ENCODE measurements at regions of chr2 and their contacts with region 1.

Region 1: DNA sequence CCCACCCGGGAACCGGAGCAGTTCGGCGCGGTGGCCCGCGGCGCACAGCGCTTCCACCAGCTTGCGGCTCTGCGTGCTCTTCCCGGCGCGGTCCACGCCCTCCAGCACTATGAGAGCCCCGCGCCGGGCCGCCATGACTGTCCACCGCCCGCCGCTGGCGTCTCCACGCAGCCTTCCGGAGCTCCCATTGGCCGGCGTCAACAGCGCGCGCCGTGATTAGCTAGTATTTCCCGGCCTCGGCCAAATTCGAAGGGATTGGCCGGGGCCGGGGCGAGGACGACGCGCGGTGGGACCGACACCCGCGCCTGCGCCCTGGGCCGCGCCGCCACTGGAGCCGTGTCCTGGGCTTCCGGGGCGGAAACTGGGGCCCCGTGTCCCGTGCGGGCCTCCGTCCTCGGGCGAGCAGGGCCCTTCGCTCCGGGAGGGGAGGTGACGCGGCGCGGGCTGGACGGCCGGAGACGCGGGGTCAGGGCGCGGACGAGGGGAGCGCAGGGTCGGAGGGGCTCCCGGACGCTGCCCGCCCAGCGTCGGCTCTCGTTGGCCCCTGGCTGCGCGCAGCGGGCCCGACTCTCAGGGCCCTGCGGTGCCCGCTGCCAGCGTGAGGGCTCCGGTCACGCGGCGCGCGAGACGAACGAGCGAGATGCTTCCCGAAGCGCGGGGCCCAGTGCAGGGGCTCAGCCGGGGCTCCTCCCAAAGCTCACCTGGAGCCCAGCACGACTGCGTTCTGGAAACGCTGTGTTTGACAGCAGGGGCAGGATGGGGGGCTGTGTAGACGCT is at the start of gene DTYMK:
- DNase-seq: peak; percentile 92 to 98 (median 97)
- ATAC-seq: peak; percentile 97
- H3K4me3 ChIP-seq: peak within 1 kb of the TSS; percentile 91
- H3K4me3 Mint-ChIP-seq: peak within 1 kb of the TSS; percentile 84 to 98 (median 95)
- H3K27ac ChIP-seq: peak within 1 kb of the TSS; percentile 81
- H3K27ac Mint-ChIP-seq: peak within 1 kb of the TSS; percentile 74 to 96 (median 88)
- H3K4me1 ChIP-seq: peaks cover 8 to 18% of the 10 kb centered on the region in 2 donors
- H3K4me1 Mint-ChIP-seq: peaks cover 4 to 40% (median 31%) of the 10 kb centered on the region in 7 donors
- H3K27me3 ChIP-seq: no peaks in the 10 kb centered on the region
- H3K27me3 Mint-ChIP-seq: no peaks in the 10 kb centered on the region
- total RNA-seq, gene DTYMK: 12.0 to 65.7 (median 17.0) TPM

Region 2: DNA sequence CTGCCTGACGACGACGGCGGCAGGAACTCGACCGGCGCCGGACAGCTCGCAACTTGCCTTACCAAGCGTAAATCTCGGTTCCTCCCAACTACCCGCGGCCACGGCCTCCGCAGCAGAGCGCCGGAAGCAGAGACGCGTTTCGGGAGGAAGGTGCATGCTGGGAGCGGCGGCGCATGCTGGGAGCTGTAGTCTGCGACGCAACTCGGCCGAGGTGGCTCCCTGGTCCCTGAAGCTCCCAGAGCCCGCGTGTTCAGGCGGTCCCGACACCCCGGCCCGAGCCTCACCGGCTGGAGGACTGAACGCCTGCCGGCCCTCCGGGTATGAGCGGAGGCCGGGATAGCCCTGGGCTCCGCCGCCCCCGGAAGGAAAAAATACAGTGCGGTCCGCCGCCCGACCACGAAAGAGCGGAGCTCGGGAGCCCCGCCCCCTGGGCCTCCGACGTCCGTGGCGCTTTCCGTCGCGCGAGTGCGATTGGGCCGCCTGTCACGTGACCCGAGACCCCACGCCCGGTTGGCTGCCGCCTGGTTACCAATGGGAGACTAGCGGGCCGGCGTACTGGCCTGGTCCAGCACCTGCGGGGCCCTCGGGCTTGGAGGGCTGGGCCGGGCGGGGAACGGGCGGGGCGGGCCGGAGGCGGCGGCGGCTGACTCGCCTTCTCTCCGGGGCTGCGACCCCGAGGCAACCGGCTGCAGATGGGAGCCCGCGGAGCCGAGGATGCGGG is 1100.5 kb before region 1 on chr2 and contains the start of gene CAPN10:
- CTCF ChIA-PET with region 1: no interaction called
- POLR2A ChIA-PET with region 1: no interaction called
- intact Hi-C with region 1: loop called (anchors 2 kb)
- DNase-seq: peak; percentile 93 to 98 (median 97)
- ATAC-seq: peak; percentile 92
- H3K4me3 ChIP-seq: peak within 1 kb of the TSS; percentile 89
- H3K4me3 Mint-ChIP-seq: peak within 1 kb of the TSS; percentile 82 to 97 (median 94)
- H3K27ac ChIP-seq: peak within 1 kb of the TSS; percentile 94
- H3K27ac Mint-ChIP-seq: peak within 1 kb of the TSS; percentile 90 to 97 (median 92)
- H3K4me1 ChIP-seq: peaks cover 30 to 33% of the 10 kb centered on the region in 2 donors
- H3K4me1 Mint-ChIP-seq: peaks cover 31 to 69% (median 56%) of the 10 kb centered on the region in 7 donors
- H3K27me3 ChIP-seq: no peaks in the 10 kb centered on the region
- H3K27me3 Mint-ChIP-seq: no peaks in the 10 kb centered on the region
- total RNA-seq, gene CAPN10: 54.1 to 74.8 (median 64.5) TPM

Region 3: DNA sequence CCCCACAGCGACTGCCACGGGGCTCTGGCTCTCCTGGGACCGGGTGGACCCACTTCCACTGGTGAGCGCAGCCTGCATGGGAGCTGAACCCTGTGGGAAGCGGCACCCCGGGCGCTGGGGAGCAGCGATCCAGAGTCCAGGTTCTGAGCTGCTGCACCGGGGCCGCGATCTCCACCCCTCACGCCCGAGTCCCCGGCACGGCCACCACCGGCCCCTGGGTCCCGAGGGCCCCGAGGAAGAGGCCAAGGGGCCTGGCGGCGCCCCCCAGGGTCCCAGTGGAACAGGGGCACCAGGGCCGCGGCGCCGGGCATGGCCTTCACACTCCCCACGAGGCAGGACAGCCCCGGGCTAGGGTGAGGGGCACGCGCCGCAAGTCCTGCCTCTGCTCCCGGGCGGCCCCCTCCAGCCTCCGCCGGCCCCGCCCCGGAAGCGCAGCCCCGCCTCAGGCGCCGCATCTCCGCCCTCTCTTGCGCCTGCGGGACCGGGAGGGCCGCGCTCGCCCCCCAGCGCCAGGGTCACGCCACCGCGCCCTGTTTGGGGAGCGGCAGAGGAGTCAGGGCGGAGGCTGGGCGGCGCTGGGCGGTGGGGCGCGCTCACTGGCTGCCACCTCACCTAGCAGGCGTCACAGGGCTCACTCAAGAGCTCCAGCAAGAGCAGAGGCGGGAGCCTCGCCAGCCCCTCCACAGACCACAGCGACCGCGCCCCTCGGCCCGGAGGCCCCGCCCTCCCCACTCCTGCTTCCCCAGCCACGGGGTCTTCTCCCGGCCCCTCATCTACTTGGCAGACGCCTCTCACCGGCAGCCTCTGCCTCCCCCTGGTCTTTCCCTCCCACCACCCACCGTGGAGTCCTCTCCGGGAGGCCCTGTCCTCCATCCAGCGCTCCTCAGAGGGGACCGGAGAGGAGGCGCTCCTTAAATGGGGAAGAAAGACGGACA is 76.7 kb before region 1 on chr2:
- CTCF ChIA-PET with region 1: no interaction called
- POLR2A ChIA-PET with region 1: no interaction called
- intact Hi-C with region 1: loop called in 1 of 2 experiments (anchors 1 kb)
- DNase-seq: peak; percentile 87 to 92 (median 90)
- ATAC-seq: peak; percentile 99
- H3K4me3 ChIP-seq: peak overlapping the region; percentile 53
- H3K4me3 Mint-ChIP-seq: peak overlapping the region in 9 of 10 donors; percentile 61 to 79 (median 71)
- H3K27ac ChIP-seq: peak overlapping the region; percentile 61
- H3K27ac Mint-ChIP-seq: peak overlapping the region; percentile 9 to 95 (median 68)
- H3K4me1 ChIP-seq: peaks cover 14 to 17% of the 10 kb centered on the region in 2 donors
- H3K4me1 Mint-ChIP-seq: peaks cover 16 to 33% (median 24%) of the 10 kb centered on the region in 7 donors
- H3K27me3 ChIP-seq: no peaks in the 10 kb centered on the region
- H3K27me3 Mint-ChIP-seq: no peaks in the 10 kb centered on the region

Region 4: DNA sequence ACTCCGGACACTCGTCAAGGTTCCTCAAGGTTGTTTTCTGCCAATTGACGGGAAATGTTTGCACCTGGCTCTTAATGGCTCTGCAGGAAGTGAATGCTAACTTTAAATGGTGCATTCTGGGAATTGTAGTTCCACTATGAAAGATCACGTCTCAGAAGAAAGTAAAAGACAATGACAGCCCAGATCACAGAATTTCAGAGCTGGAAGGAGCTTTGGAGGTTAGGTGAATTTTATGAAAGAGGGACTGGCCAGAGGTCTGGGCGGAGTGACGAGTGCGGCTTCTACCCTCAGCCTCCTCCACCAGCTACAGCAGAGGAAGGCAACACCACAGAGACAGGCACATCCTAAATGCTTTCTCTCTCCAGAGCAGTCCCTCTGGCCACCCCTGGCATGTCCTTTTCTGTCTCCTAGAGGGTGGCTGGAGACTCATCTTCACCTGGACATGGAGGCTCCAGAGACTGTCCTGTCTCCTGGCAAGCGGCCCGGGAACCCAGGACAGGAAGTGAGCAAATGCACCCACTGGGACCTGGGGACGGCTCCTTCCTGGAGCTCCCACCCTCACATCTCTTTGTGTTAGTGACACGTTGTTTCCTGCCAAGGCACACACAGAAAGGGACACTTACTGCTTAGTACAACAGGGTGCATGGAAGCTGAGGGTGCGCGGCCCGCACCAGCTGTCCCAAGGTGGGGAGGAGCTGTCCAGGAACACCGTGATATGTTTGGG is 69.2 kb before region 1 on chr2:
- CTCF ChIA-PET with region 1: no interaction called
- POLR2A ChIA-PET with region 1: interaction called, 8 read pairs
- intact Hi-C with region 1: loop called (anchors 1 to 2 kb)
- DNase-seq: peak in 8 of 9 donors; percentile 41 to 71 (median 60)
- ATAC-seq: peak; percentile 77
- H3K4me3 ChIP-seq: peak overlapping the region; percentile 68
- H3K4me3 Mint-ChIP-seq: peak overlapping the region; percentile 79 to 96 (median 91)
- H3K27ac ChIP-seq: peak overlapping the region; percentile 75
- H3K27ac Mint-ChIP-seq: peak overlapping the region; percentile 85 to 98 (median 94)
- H3K4me1 ChIP-seq: peaks cover 13 to 18% of the 10 kb centered on the region in 2 donors
- H3K4me1 Mint-ChIP-seq: peaks cover 23 to 49% (median 43%) of the 10 kb centered on the region in 7 donors
- H3K27me3 ChIP-seq: no peaks in the 10 kb centered on the region
- H3K27me3 Mint-ChIP-seq: no peaks in the 10 kb centered on the region

Region 5: DNA sequence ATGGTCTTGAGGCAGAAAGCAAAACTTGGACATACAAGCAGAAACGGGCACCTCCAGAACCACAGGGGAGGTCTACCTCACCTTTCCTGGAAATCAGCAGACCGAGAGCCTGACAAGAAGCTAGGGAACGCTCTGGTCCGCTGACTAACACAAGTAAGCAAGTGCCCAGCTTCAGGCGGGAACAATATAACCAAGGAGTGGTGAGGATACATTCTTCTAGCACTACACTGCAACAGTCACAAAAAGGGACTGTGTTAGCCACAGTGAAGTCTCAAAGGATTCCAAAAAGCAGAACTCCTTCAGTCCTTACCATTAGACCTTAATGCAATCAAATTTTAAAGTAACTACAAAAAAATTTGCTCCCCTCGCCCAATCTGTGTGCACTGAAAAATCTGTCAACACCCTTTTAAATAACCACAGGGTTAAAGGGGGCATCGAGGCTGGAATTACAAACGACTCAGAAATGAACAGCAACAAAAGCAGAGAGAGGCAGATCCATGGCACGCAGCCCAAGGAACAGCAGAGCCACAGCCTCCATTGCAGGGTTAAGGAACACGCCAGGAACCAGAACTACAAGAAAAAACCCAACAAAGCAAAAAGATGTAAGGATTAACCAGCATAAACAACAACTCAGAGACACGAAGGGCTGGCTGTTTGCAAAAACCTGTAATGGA is 56.9 kb before region 1 on chr2:
- CTCF ChIA-PET with region 1: no interaction called
- POLR2A ChIA-PET with region 1: no interaction called
- intact Hi-C with region 1: no loop called
- DNase-seq: no peak
- ATAC-seq: no peak
- H3K4me3 ChIP-seq: no peak overlapping the region
- H3K4me3 Mint-ChIP-seq: no peak overlapping the region
- H3K27ac ChIP-seq: no peak overlapping the region
- H3K27ac Mint-ChIP-seq: peak overlapping the region in 1 of 9 donors; percentile 83
- H3K4me1 ChIP-seq: no peaks in the 10 kb centered on the region
- H3K4me1 Mint-ChIP-seq: peaks cover 11 to 30% (median 17%) of the 10 kb centered on the region in 7 donors
- H3K27me3 ChIP-seq: no peaks in the 10 kb centered on the region
- H3K27me3 Mint-ChIP-seq: no peaks in the 10 kb centered on the region

Region 6: GRCh38 chr2:241734467-241735208 is 47.8 kb after region 1 on chr2 and contains the start of gene D2HGDH:
- CTCF ChIA-PET with region 1: no interaction called
- POLR2A ChIA-PET with region 1: interaction called, 4 read pairs
- intact Hi-C with region 1: loop called (anchors 1 kb)
- DNase-seq: peak; percentile 85 to 99 (median 91)
- ATAC-seq: peak; percentile 98
- H3K4me3 ChIP-seq: peak within 1 kb of the TSS; percentile 88
- H3K4me3 Mint-ChIP-seq: peak within 1 kb of the TSS; percentile 79 to 89 (median 84)
- H3K27ac ChIP-seq: peak within 1 kb of the TSS; percentile 75
- H3K27ac Mint-ChIP-seq: peak within 1 kb of the TSS in 8 of 9 donors; percentile 40 to 79 (median 72)
- H3K4me1 ChIP-seq: peaks cover 9% of the 10 kb centered on the region in 2 donors
- H3K4me1 Mint-ChIP-seq: peaks cover 9 to 54% (median 43%) of the 10 kb centered on the region in 7 donors
- H3K27me3 ChIP-seq: no peaks in the 10 kb centered on the region
- H3K27me3 Mint-ChIP-seq: no peaks in the 10 kb centered on the region
- total RNA-seq, gene D2HGDH: 32.5 to 49.8 (median 41.1) TPM

Region 7: DNA sequence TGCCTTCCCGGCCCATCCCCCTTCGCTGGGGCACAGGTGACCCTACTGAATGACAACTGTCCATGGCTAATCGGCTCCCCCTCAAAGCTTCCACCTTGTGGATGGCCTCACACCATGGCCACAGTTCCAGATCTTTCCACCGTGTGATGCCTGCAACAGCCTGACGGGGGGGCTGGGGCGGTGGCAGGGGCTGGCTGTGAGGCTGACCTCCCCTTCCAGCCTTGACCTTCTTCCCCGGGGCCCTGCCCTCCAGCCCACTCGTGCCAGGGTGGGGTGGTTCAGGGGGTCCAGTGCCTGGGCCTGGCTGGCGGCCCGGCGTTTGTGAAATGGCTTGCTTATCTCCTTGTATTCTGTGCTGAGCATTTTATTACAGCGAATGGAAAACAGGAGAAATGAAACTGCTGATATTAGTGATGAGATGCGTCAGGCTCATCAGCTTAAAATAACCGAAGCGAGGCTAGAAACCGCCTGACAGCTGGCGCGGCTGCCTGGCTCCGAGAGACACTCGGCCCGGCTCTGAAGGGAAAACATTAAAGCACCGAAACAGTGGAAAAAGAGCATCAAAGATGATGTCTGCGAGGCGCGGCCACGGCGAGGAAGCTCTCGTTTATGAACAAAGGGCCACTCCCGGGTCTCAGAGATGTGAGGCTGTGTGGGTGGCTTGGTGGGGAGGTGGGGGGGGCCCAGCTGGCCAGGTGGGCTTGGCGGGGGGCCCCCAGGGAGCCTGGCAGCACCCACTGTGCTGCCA is 172.8 kb after region 1 on chr2:
- CTCF ChIA-PET with region 1: no interaction called
- POLR2A ChIA-PET with region 1: no interaction called
- intact Hi-C with region 1: loop called in 1 of 2 experiments (anchors 5 kb)
- DNase-seq: peak in 4 of 9 donors; percentile 18 to 67 (median 30)
- ATAC-seq: peak; percentile 30
- H3K4me3 ChIP-seq: peak overlapping the region; percentile 61
- H3K4me3 Mint-ChIP-seq: peak overlapping the region; percentile 84 to 91 (median 86)
- H3K27ac ChIP-seq: peak overlapping the region; percentile 11
- H3K27ac Mint-ChIP-seq: peak overlapping the region; percentile 9 to 96 (median 70)
- H3K4me1 ChIP-seq: peaks cover 23 to 62% of the 10 kb centered on the region in 2 donors
- H3K4me1 Mint-ChIP-seq: peaks cover 18 to 50% (median 36%) of the 10 kb centered on the region in 7 donors
- H3K27me3 ChIP-seq: peaks cover 0 to 3% of the 10 kb centered on the region in 2 donors
- H3K27me3 Mint-ChIP-seq: peaks cover 5 to 32% (median 19%) of the 10 kb centered on the region in 5 donors